ENCODE measurements at regions of chr4 and their contacts with region 1.

Region 1: GRCh38 chr4:25367004-25367621 is 9.9 kb upstream of the ANAPC4 start:
- DNase-seq: peak; percentile 52
- H3K4me3 ChIP-seq: no peak overlapping the region
- H3K27ac ChIP-seq: no peak overlapping the region
- H3K4me1 ChIP-seq: no peaks in the 10 kb centered on the region
- H3K27me3 ChIP-seq: no peaks in the 10 kb centered on the region

Region 2: DNA sequence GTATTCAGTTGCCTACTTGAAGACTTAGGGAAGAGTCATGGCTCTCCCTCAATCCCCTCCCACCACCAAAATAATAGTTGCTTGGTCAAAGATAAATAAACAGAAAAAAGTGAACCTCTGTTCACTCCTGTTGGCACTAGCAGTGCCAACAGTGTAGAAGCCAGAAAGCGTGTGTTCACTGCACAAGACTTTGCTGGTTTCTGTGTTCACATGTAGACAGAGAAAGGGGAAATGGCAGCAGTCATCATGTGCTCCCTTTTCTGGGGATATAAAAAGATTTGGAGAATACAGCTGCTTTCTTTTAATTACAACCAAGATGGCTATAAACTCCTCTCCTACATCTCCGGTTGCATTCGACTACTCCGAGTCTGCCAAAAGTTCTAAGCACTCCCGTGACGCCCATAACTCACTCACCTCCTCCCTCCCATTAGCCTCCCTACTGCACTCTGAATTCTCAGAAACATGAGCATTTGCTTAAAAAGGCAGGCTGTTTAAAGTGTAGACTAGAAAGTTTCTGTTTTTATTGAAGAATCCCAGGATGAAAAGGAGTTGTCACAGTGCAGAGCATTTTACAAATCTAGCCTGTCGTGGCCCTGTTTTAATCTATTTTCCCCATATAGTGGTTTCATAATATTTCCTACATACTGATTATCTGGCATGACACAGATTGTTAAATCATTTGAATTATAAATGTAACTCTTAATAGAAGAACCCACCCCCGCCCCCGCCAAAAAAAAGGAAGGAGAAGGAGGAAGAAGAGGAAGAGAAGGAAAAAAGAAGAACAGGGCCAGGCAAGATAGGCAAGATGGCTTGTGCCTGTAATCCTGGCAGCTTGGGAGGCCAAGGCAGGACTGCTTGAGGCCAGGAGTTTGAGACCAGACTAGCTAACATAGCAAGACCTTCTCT is 353.1 kb before region 1 on chr4:
- in situ Hi-C with region 1: loop called (anchors 25 kb)
- DNase-seq: no peak
- H3K4me3 ChIP-seq: no peak overlapping the region
- H3K27ac ChIP-seq: no peak overlapping the region
- H3K4me1 ChIP-seq: no peaks in the 10 kb centered on the region
- H3K27me3 ChIP-seq: peaks cover 11% of the 10 kb centered on the region; the same call in 1 of the 2 replicates

Region 3: GRCh38 chr4:25180524-25181131 is 186.5 kb before region 1 on chr4:
- in situ Hi-C with region 1: loop called (anchors 25 kb)
- DNase-seq: peak; percentile 74
- H3K4me3 ChIP-seq: no peak overlapping the region
- H3K27ac ChIP-seq: no peak overlapping the region
- H3K4me1 ChIP-seq: no peaks in the 10 kb centered on the region
- H3K27me3 ChIP-seq: no peaks in the 10 kb centered on the region

Measured in GM23248 (cell line).